MCF 10A (cell line): ENCODE measurements at regions of chr10 and their contacts with region 1.

Region 1: GRCh38 chr10:102835007-102835482 is 2.2 kb downstream of the CYP17A1 start:
- DNase-seq: peak; percentile 82
- H3K4me3 Mint-ChIP-seq: no peak overlapping the region
- H3K27ac Mint-ChIP-seq: no peak overlapping the region
- H3K4me1 Mint-ChIP-seq: peaks cover 9% of the 10 kb centered on the region
- H3K27me3 Mint-ChIP-seq: peaks cover 12% of the 10 kb centered on the region
- CTCF ChIP-seq: peak; percentile 76

Region 2: DNA sequence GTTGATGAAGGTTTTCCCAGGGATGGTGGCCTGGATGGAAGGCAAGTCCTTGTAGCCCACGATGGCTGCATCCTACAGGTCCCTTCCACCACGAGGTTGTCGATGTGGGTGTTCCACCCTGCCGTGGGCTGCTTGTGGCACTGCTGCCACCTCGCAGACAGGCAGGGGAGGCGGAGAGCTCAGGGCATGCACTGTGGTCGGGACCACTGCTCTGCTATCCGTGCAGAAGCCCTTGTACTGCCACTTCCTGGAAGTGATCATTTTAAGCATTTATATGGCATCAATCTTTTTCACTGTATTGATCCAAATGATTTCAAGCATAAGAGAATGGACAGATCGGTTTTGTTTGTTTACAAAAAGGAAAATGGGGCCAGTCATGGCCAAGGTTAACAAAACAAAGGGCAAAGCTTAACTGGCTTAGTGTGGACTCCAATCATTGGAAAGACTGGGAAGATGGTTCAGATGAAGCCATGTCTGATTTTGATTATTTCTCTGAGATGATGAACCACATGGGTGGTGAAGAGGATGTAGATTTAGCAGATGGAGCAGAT is 10.4 kb after region 1 on chr10:
- CTCF ChIA-PET with region 1: interaction called, 28 read pairs
- POLR2A ChIA-PET with region 1: no interaction called
- intact Hi-C with region 1: no loop called
- DNase-seq: no peak
- H3K4me3 Mint-ChIP-seq: no peak overlapping the region
- H3K27ac Mint-ChIP-seq: no peak overlapping the region
- H3K4me1 Mint-ChIP-seq: no peaks in the 10 kb centered on the region
- H3K27me3 Mint-ChIP-seq: peaks cover 13% of the 10 kb centered on the region
- CTCF ChIP-seq: no peak

Region 3: DNA sequence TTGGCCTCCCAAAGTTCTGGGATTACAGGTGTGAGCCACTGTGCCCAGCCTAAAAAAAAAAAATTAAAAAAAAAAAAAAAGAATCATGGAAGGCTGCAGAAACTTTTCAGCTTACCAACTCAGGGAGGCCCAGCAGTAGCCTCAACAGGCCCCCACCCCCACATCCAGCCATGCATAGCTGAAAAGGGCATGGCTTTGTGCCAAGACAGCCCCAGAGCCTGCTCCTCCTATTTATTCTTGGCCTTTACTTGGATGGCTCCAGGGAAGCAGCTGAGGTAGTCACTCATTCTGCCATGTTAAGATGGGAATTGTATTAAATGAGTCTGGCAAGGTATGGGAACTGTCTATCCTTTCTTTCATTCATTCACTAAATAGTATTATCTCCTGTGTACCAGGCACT is 69.3 kb after region 1 on chr10:
- CTCF ChIA-PET with region 1: interaction called, 124 read pairs
- POLR2A ChIA-PET with region 1: interaction called, 7 read pairs
- intact Hi-C with region 1: loop called (anchors 1 kb)
- DNase-seq: no peak
- H3K4me3 Mint-ChIP-seq: no peak overlapping the region
- H3K27ac Mint-ChIP-seq: no peak overlapping the region
- H3K4me1 Mint-ChIP-seq: no peaks in the 10 kb centered on the region
- H3K27me3 Mint-ChIP-seq: no peaks in the 10 kb centered on the region
- CTCF ChIP-seq: no peak

Region 4: DNA sequence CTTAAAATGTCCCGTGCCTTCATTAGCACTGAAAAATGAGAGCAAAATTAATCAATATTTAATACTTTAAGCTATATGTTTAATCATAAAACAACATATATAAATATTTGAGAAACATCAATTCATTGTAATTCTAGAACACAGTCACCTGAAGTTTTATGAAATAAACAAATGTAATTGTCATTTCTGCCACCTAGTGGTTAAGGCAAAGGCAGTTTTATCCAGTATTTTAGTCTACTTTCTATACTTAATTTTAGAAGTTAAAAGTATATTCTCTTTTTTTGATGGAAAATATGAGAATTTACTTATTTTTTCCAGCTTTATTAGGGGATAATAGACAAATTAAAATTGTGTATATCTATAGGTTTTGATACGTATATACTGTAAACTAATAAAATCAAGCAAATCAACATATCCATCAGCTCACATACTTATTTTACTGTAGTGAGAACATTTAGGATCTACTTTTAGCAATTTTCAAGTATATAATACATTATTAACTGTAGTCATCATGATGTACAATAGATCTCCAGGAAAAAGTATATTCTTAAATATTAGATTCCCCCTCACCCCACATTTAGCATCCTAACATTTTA is 499.0 kb after region 1 on chr10:
- CTCF ChIA-PET with region 1: interaction called, 4 read pairs
- POLR2A ChIA-PET with region 1: no interaction called
- intact Hi-C with region 1: loop called (anchors 10 kb)
- DNase-seq: peak; percentile 36
- H3K4me3 Mint-ChIP-seq: no peak overlapping the region
- H3K27ac Mint-ChIP-seq: no peak overlapping the region
- H3K4me1 Mint-ChIP-seq: no peaks in the 10 kb centered on the region
- H3K27me3 Mint-ChIP-seq: no peaks in the 10 kb centered on the region
- CTCF ChIP-seq: peak; percentile 44